ENCODE measurements at regions of chr7 and their contacts with region 1.

Region 1: GRCh38 chr7:131507592-131508331 is 48.7 kb downstream of the PODXL start:
- DNase-seq: peak; percentile 67
- ATAC-seq: peak; percentile 91
- H3K4me3 Mint-ChIP-seq: no peak overlapping the region
- H3K27ac Mint-ChIP-seq: no peak overlapping the region
- H3K4me1 Mint-ChIP-seq: peaks cover 18% of the 10 kb centered on the region
- H3K27me3 Mint-ChIP-seq: peaks cover 3% of the 10 kb centered on the region
- CTCF ChIP-seq: peak; percentile 50

Region 2: GRCh38 chr7:131556052-131556908 is 48.5 kb after region 1 on chr7 and contains the start of gene PODXL:
- CTCF ChIA-PET with region 1: no interaction called
- POLR2A ChIA-PET with region 1: no interaction called
- intact Hi-C with region 1: loop called (anchors 5 kb)
- DNase-seq: peak; percentile 67
- ATAC-seq: peak; percentile 87
- H3K4me3 Mint-ChIP-seq: peak within 1 kb of the TSS; percentile 81
- H3K27ac Mint-ChIP-seq: no peak within 1 kb of the TSS
- H3K4me1 Mint-ChIP-seq: peaks cover 24% of the 10 kb centered on the region
- H3K27me3 Mint-ChIP-seq: peaks cover 11% of the 10 kb centered on the region
- CTCF ChIP-seq: no peak
- total RNA-seq, gene PODXL: 0.93 and 1.4 TPM in 2 replicates

Measured in activated B cell treated with CpG ODN at 0.5 μM for 24 hours (primary cell).